HEK293 (cell line): ENCODE measurements at regions of chr16 and their contacts with region 1.

Region 1: DNA sequence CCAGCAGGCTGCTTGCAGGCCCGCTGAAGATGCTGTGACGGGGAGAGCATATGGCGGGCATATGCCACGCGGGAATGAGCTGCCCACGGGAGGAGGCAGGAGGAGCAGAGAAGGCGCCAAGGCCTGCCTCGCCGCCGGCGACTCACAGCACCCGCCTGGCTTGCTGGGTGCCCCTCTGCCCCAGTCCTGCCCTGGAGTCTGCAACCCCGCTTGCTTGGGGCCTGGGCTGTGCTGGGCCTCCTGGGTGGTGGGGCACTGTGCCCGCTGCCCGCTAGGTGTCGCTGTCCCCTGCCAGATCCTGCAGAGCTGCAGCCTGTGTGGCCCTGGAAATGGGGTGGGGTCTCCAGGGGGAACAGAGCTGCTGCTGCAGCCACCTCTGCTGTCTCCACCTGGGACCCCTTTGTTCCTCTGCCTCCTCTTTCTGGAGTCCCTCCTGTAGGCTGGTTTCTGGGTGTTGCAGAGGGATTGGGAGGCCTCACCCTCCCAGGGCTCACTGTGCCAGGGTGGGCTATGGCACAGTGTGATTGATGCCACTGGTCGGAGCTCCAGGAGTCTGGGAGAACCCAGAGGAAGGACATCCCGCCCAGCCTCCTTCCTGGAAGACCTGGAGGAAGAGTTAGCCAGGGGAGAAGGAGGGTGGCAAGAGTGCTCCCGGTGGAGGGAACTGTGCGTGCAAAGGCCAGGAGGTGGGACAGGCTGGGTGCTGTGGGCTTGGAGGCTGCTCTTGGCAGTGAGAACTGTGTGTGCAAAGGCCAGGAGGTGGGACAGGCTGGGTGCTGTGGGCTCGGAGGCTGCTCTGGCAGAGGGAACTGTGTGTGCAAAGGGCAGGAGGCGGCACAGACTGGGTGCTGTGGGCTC is 141.0 kb upstream of the CIBAR2 start:
- H3K4me3 ChIP-seq: no peak overlapping the region
- H3K27ac ChIP-seq: no peak overlapping the region
- H3K4me1 ChIP-seq: no peaks in the 10 kb centered on the region
- CTCF ChIP-seq: peak; percentile 86

Region 2: GRCh38 chr16:85266857-85267256 is 13.5 kb after region 1 on chr16:
- CTCF ChIA-PET with region 1: interaction called, 29 read pairs
- POLR2A ChIA-PET with region 1: no interaction called
- H3K4me3 ChIP-seq: no peak overlapping the region
- H3K27ac ChIP-seq: no peak overlapping the region
- H3K4me1 ChIP-seq: no peaks in the 10 kb centered on the region
- CTCF ChIP-seq: no peak

Region 3: DNA sequence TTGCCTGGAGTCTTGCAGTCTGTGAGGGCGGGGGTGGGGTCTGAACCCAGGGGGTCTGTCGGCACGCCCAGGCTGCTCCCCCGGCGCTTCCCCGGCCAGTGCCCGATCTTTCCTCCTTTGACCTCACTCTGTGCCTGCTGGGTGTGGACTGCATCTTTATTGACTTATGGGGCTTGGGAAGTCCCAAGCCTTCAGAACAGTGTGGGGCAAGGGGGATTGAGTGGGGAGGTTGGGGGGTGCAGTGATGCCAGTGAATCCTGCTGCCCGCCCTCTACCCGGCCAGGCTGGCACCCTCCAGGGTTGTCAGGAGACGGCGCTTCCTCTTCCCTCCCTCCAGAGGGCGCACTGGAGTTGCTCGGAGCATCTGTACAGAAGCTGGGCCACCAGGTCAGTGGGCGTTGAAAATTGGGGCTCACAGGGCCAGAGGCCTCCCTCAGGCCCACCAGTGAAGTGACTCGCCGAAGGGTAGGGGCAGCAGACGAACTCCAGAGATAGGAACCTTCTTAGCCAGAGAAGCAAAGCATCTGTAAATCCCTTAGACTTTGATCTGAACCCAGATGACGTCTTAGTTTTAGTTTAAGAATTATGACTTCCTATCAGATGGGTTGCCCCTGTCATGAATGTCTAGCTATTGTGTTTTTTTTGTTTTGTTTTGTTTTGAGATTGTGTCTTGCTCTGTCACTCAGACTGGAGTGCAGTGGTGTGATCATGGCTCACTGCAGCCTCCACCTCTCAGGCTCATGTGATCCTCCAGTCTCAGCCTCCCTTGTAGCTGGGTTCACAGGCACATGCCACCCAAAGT is 43.7 kb after region 1 on chr16:
- CTCF ChIA-PET with region 1: interaction called, 15 read pairs
- POLR2A ChIA-PET with region 1: no interaction called
- H3K4me3 ChIP-seq: no peak overlapping the region
- H3K27ac ChIP-seq: no peak overlapping the region
- H3K4me1 ChIP-seq: no peaks in the 10 kb centered on the region
- CTCF ChIP-seq: peak; percentile 44; the same call in 1 of the 2 replicates